Vagina (tissue), 2 donors: ENCODE measurements at regions of chr6 and their contacts with region 1.

Region 1: GRCh38 chr6:125153391-125154117 is at the start of gene TPD52L1:
- DNase-seq: no peak
- H3K4me3 ChIP-seq: peak within 1 kb of the TSS; percentile 59 to 68
- H3K27ac ChIP-seq: peak within 1 kb of the TSS; percentile 71
- H3K4me1 ChIP-seq: peaks cover 18% of the 10 kb centered on the region
- H3K27me3 ChIP-seq: no peaks in the 10 kb centered on the region
- CTCF ChIP-seq: peak; percentile 32 to 91 (median 59)
- POLR2A ChIP-seq: no peak
- total RNA-seq, gene TPD52L1: 85.0 TPM

Region 2: GRCh38 chr6:125197795-125198269 is 44.3 kb after region 1 on chr6:
- intact Hi-C with region 1: no loop called
- DNase-seq: no peak
- H3K4me3 ChIP-seq: no peak overlapping the region
- H3K27ac ChIP-seq: peak overlapping the region; percentile 22
- H3K4me1 ChIP-seq: peaks cover 47% of the 10 kb centered on the region
- H3K27me3 ChIP-seq: no peaks in the 10 kb centered on the region
- CTCF ChIP-seq: no peak
- POLR2A ChIP-seq: no peak

Region 3: GRCh38 chr6:125301435-125302391 is 148.2 kb after region 1 on chr6 and contains the start of gene HDDC2:
- intact Hi-C with region 1: loop called (anchors 10 kb)
- DNase-seq: no peak
- H3K4me3 ChIP-seq: peak within 1 kb of the TSS; percentile 66 to 87
- H3K27ac ChIP-seq: peak within 1 kb of the TSS; percentile 85
- H3K4me1 ChIP-seq: peaks cover 24% of the 10 kb centered on the region
- H3K27me3 ChIP-seq: no peaks in the 10 kb centered on the region
- CTCF ChIP-seq: no peak
- POLR2A ChIP-seq: no peak
- total RNA-seq, gene HDDC2: 69.5 TPM

Region 4: GRCh38 chr6:125759184-125759902 is 605.8 kb after region 1 on chr6:
- intact Hi-C with region 1: loop called (anchors 10 kb)
- DNase-seq: no peak
- H3K4me3 ChIP-seq: no peak overlapping the region
- H3K27ac ChIP-seq: no peak overlapping the region
- H3K4me1 ChIP-seq: no peaks in the 10 kb centered on the region
- H3K27me3 ChIP-seq: no peaks in the 10 kb centered on the region
- CTCF ChIP-seq: no peak
- POLR2A ChIP-seq: no peak